ENCODE measurements at regions of chr5 and their contacts with region 1.

Region 1: DNA sequence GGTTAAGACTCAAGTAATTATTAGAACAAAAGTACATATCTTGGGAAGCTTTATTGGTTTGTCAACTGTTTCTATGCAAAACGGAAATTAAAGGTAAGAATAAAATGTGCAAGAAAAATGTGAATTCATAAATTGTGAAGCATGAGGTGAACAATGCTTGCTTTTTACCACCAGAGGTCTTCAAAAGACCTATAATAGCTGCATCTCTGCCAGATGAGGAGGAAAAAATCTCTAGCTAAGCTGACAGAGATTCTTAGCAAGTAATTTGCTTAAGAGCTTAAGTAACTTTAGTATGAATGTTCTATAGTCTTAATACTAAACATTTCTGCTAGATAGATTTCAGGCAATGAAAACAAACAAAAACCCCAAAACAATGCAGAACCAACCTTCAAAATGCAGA is 54.1 kb downstream of the MRPS30 start:
- DNase-seq: peak; percentile 17
- H3K4me3 ChIP-seq: no peak overlapping the region
- H3K27ac ChIP-seq: no peak overlapping the region
- H3K4me1 ChIP-seq: peaks cover 11% of the 10 kb centered on the region
- H3K27me3 ChIP-seq: no peaks in the 10 kb centered on the region
- CTCF ChIP-seq: peak; percentile 51 to 61

Region 2: GRCh38 chr5:44952376-44952775 is 89.6 kb after region 1 on chr5:
- CTCF ChIA-PET with region 1: no interaction called
- dilution Hi-C with region 1: no loop called
- in situ Hi-C with region 1: no loop called
- intact Hi-C with region 1: loop called (anchors 5 kb)
- DNase-seq: peak; percentile 30
- H3K4me3 ChIP-seq: no peak overlapping the region
- H3K27ac ChIP-seq: no peak overlapping the region
- H3K4me1 ChIP-seq: no peaks in the 10 kb centered on the region
- H3K27me3 ChIP-seq: no peaks in the 10 kb centered on the region
- CTCF ChIP-seq: peak; percentile 62 to 82

Region 3: DNA sequence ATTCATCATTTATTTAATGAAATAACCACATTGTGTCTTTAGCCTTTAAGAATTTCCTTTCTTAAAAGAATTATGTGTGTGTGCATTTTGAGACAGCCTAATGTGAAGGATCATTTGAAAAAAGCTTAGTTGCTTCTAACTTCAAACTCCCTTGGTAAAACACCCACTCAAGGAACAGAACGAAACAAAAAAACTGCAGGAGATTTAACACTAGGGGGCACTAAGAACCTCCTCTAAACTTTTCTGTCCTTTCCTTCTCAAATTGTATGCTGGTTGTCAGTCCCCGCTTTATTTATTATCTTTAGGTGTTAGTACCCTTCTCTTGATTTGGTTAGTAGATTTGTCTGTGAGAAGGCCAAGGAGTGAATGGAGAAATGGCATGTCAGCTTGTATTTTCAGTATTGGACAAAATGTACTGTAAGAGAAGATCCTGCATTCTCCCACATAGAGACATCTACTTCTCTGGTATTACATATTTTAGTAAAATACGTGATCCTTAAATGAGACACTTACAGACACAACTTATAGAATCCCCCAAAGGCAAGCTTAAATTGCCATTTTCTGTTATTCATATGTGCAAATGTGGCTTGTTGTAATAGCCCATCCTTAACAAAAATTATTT is 175.7 kb after region 1 on chr5:
- CTCF ChIA-PET with region 1: no interaction called
- dilution Hi-C with region 1: no loop called
- in situ Hi-C with region 1: no loop called
- intact Hi-C with region 1: loop called (anchors 5 kb)
- DNase-seq: no peak
- H3K4me3 ChIP-seq: no peak overlapping the region
- H3K27ac ChIP-seq: no peak overlapping the region
- H3K4me1 ChIP-seq: no peaks in the 10 kb centered on the region
- H3K27me3 ChIP-seq: no peaks in the 10 kb centered on the region
- CTCF ChIP-seq: peak; percentile 37 to 62